ENCODE measurements at regions of chr1 and their contacts with region 1.

Region 1: GRCh38 chr1:209354111-209354839 is 229.2 kb upstream of the CAMK1G start:
- DNase-seq: peak; percentile 84
- H3K4me3 ChIP-seq: no peak overlapping the region
- H3K27ac ChIP-seq: peak overlapping the region; percentile 80
- H3K4me1 ChIP-seq: peaks cover 35% of the 10 kb centered on the region
- H3K27me3 ChIP-seq: no peaks in the 10 kb centered on the region
- CTCF ChIP-seq: peak; percentile 90 to 94

Region 2: DNA sequence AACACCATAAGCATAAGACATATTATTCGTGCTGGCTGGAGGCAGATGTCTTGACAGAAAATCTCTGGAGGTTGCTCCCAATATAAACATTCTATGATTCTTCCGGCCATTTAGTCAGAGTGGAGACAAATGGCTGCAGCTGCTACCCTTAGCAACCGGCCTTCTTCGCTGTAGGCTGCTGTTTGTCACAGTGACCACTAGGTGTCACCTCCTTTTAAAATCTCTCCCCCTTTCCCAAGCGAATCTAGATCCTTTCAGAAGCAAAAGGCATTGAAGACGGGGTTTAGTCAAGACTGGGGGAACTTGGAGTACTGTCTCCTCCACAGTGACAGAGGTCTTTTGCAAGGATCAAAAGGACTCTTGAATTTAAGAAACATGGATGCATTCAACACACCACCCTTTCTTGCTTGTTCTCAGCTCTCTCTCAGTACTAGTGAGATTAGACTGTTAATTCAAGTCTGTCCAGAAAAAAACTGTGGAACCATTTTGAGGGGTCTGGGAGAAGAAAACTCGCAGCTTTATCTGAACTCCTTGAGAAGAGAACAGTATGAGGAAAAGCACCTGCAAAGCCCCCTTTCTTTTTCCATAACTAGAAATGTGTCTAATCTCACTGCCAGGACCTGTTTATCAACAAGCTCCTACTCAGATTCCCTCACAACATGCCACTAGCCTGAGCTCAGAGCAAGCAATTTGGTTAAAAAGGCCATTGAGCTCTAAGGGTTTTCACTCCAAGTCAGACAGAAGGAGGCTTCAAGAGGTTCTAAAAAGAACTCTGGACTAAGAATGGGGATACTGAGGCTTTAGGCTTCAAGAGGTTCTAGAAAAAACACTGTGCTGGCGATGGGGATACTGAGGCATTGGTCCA is 701.7 kb before region 1 on chr1:
- CTCF ChIA-PET with region 1: no interaction called
- dilution Hi-C with region 1: no loop called
- in situ Hi-C with region 1: no loop called
- intact Hi-C with region 1: loop called (anchors 2 kb)
- DNase-seq: peak; percentile 54
- H3K4me3 ChIP-seq: no peak overlapping the region
- H3K27ac ChIP-seq: no peak overlapping the region
- H3K4me1 ChIP-seq: no peaks in the 10 kb centered on the region
- H3K27me3 ChIP-seq: peaks cover 6% of the 10 kb centered on the region
- CTCF ChIP-seq: peak; percentile 83 to 87

Region 3: DNA sequence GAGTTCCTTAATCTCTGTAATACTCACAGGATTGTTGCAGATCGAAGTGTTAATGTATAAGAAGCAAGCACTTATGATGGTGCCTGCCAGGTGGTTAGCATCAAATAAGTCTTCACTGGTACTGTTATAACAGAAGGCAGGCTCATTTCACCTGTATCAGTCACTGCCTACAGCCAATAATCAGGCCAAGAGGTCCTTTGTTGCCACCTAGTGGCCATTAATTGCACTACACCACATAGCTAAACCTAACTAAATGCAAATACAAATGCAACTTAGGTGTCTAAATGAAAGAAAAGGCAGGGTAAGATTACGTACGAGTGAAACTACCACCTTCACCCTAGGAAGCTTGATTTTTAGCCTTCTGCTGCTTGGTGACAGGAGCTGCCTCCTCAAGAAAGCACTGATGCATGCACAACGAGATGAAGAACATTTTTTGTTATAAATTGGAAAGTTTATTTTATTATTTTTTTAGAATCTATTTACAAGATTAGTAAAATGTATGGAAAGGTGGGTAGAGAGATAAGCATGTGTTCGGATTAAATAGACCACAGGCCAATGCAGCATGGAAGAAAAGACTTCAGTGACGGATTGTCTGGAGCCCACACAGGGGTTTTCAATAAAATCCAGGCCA is 105.5 kb before region 1 on chr1:
- CTCF ChIA-PET with region 1: no interaction called
- dilution Hi-C with region 1: loop called (anchors 5 kb)
- in situ Hi-C with region 1: no loop called
- intact Hi-C with region 1: loop called (anchors 1 kb)
- DNase-seq: peak; percentile 56
- H3K4me3 ChIP-seq: no peak overlapping the region
- H3K27ac ChIP-seq: no peak overlapping the region
- H3K4me1 ChIP-seq: peaks cover 13% of the 10 kb centered on the region
- H3K27me3 ChIP-seq: no peaks in the 10 kb centered on the region
- CTCF ChIP-seq: peak; percentile 92 to 95

Region 4: GRCh38 chr1:209389258-209389657 is 35.0 kb after region 1 on chr1:
- CTCF ChIA-PET with region 1: interaction called, 8 read pairs
- dilution Hi-C with region 1: no loop called
- in situ Hi-C with region 1: no loop called
- intact Hi-C with region 1: loop called (anchors 1 kb)
- DNase-seq: peak; percentile 98
- H3K4me3 ChIP-seq: no peak overlapping the region
- H3K27ac ChIP-seq: peak overlapping the region; percentile 98
- H3K4me1 ChIP-seq: peaks cover 64% of the 10 kb centered on the region
- H3K27me3 ChIP-seq: no peaks in the 10 kb centered on the region
- CTCF ChIP-seq: no peak

Region 5: DNA sequence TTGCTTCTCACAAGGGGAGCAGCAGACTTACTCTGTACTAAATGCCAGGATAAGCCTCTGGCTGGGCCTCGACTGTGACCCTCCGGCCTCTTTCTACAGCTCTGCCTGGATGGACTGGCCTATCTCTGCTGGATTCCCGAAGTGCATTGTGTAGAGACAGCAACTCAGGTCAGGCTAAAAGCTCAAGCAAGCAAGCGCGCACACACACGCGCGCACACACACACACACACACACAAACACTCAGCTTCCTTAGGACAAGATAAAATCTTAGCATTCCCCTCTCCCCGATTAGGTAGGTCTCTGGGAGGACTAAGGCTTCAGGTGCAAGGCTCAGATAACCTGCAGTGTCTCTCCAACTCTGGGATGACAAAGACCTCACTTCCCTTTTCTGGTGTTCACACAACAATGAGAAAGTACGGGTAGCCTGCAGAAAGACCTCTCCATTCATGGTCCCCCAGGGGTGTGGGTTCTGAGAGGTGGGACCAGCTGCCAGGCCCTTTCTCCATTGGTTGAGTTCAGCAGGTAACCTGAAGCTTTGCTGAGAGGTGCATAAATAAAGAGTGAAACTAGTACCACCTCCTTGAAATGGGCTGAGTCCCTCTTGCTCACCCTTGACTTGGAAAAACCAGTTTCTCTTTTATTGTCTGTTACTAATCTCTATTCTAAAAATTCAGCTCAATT is 74.1 kb after region 1 on chr1:
- CTCF ChIA-PET with region 1: interaction called, 7 read pairs
- dilution Hi-C with region 1: no loop called
- in situ Hi-C with region 1: no loop called
- intact Hi-C with region 1: loop called (anchors 1 kb)
- DNase-seq: peak; percentile 97
- H3K4me3 ChIP-seq: peak overlapping the region; percentile 52 to 98 (median 94)
- H3K27ac ChIP-seq: peak overlapping the region; percentile 99
- H3K4me1 ChIP-seq: peaks cover 41% of the 10 kb centered on the region
- H3K27me3 ChIP-seq: no peaks in the 10 kb centered on the region
- CTCF ChIP-seq: no peak

Region 6: GRCh38 chr1:209513226-209513625 is 159.0 kb after region 1 on chr1:
- CTCF ChIA-PET with region 1: no interaction called
- dilution Hi-C with region 1: no loop called
- in situ Hi-C with region 1: no loop called
- intact Hi-C with region 1: loop called (anchors 2 kb)
- DNase-seq: peak; percentile 55
- H3K4me3 ChIP-seq: no peak overlapping the region
- H3K27ac ChIP-seq: no peak overlapping the region
- H3K4me1 ChIP-seq: no peaks in the 10 kb centered on the region
- H3K27me3 ChIP-seq: no peaks in the 10 kb centered on the region
- CTCF ChIP-seq: peak; percentile 80 to 85

Measured in mammary epithelial cell (primary cell).